ENCODE measurements at regions of chr17 and their contacts with region 1.

Region 1: GRCh38 chr17:21457051-21458026 is 81.2 kb downstream of the KCNJ12 start:
- DNase-seq: peak; percentile 88
- H3K4me3 Mint-ChIP-seq: peak overlapping the region; percentile 36
- H3K27ac Mint-ChIP-seq: peak overlapping the region; percentile 50
- H3K4me1 Mint-ChIP-seq: peaks cover 19% of the 10 kb centered on the region
- H3K27me3 Mint-ChIP-seq: peaks cover 17% of the 10 kb centered on the region

Region 2: GRCh38 chr17:21376759-21377690 is 80.3 kb before region 1 on chr17:
- CTCF ChIA-PET with region 1: no interaction called
- POLR2A ChIA-PET with region 1: no interaction called
- DNase-seq: no peak
- H3K4me3 Mint-ChIP-seq: no peak overlapping the region
- H3K27ac Mint-ChIP-seq: no peak overlapping the region
- H3K4me1 Mint-ChIP-seq: peaks cover 2% of the 10 kb centered on the region
- H3K27me3 Mint-ChIP-seq: peaks cover 27% of the 10 kb centered on the region

Region 3: GRCh38 chr17:21419299-21420239 is 37.8 kb before region 1 on chr17:
- CTCF ChIA-PET with region 1: no interaction called
- POLR2A ChIA-PET with region 1: no interaction called
- DNase-seq: peak; percentile 20
- H3K4me3 Mint-ChIP-seq: no peak overlapping the region
- H3K27ac Mint-ChIP-seq: peak overlapping the region; percentile 69
- H3K4me1 Mint-ChIP-seq: peaks cover 12% of the 10 kb centered on the region
- H3K27me3 Mint-ChIP-seq: no peaks in the 10 kb centered on the region

Region 4: GRCh38 chr17:21511363-21512198 is 54.2 kb after region 1 on chr17:
- CTCF ChIA-PET with region 1: interaction called, 27 read pairs
- POLR2A ChIA-PET with region 1: no interaction called
- DNase-seq: peak; percentile 61
- H3K4me3 Mint-ChIP-seq: peak overlapping the region; percentile 61
- H3K27ac Mint-ChIP-seq: no peak overlapping the region
- H3K4me1 Mint-ChIP-seq: peaks cover 21% of the 10 kb centered on the region
- H3K27me3 Mint-ChIP-seq: peaks cover 46% of the 10 kb centered on the region

Measured in activated CD4-positive, alpha-beta T cell treated with anti-CD3 and anti-CD28 coated beads, Interleukin-2, amount 10 ng/mL, durations not matched to agents 7 days and 5 days (primary cell).